Activated CD4-positive, alpha-beta T cell treated with anti-CD3 and anti-CD28 coated beads for 36 hours (primary cell): ENCODE measurements at regions of chr13 and their contacts with region 1.

Region 1: DNA sequence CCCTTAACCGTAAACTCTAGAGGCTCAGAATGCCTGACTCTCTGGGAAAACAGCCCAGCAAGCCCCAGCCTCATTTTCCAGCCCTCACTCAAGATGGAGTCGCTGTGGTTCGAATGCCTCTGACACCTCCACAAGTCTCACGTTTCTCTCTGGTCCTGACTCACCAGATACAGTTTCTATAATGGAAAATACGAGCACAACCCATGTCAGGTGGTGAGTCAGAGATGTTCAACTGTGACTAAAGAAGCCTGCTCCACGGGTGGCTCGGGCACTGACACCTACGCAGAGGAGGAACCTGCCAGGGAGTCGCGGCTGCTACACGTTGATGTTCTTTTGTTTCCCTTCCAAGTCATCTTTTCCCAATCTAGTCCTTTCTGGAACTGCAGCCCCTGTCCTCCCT is 87.1 kb upstream of the STK24 start:
- DNase-seq: peak; percentile 88
- ATAC-seq: peak; percentile 99
- H3K4me3 Mint-ChIP-seq: peak overlapping the region; percentile 2
- H3K27ac Mint-ChIP-seq: peak overlapping the region; percentile 81
- H3K4me1 Mint-ChIP-seq: peaks cover 16% of the 10 kb centered on the region
- H3K27me3 Mint-ChIP-seq: peaks cover 5% of the 10 kb centered on the region

Region 2: GRCh38 chr13:98129059-98129746 is 534.8 kb before region 1 on chr13:
- CTCF ChIA-PET with region 1: no interaction called
- POLR2A ChIA-PET with region 1: no interaction called
- intact Hi-C with region 1: no loop called
- DNase-seq: no peak
- ATAC-seq: no peak
- H3K4me3 Mint-ChIP-seq: no peak overlapping the region
- H3K27ac Mint-ChIP-seq: no peak overlapping the region
- H3K4me1 Mint-ChIP-seq: no peaks in the 10 kb centered on the region
- H3K27me3 Mint-ChIP-seq: peaks cover 16% of the 10 kb centered on the region

Region 3: DNA sequence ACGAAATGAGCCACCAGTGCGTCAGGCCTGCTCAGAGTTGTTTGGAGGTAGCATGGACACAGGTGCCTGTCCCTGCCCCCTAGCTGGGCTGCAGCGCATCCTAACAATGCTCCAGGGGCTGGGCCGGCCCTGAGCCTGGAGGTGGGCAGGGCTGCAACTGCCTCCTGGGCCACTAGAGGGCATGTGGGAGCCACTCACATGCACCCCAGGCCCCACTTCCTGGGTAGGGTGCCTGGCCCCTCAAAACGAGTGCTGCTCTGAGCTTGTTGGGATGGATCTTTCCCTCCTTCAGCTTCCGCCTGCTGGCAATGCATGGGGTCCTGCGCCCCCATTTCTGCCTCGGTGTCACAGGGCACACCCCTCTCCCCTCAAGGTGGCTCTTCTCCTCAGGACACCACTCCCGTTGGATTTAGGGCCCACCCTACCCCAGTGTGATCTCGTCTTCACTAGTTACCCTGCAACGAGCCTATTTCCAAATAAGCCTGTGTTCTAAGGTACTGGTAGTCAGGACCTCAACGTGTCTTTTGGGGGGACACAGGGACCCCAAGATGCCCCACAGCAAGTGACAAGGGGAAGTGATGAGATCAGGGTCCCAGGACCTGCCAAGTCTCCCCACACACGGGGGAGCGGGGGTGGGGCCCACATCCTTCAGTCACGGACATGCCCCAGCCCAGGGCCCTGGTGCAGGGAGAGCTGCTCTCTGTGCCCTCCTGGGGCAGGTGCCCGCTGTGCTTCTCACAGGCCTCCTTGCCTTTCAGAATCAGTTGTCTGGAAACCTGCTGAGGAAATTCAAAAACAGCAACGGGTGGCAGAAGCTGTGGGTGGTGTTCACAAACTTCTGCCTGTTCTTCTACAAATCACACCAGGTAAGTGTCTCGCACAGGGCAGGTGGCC is 218.5 kb before region 1 on chr13:
- CTCF ChIA-PET with region 1: interaction called, 16 read pairs
- POLR2A ChIA-PET with region 1: no interaction called
- intact Hi-C with region 1: no loop called
- DNase-seq: peak; percentile 89
- ATAC-seq: peak; percentile 95
- H3K4me3 Mint-ChIP-seq: no peak overlapping the region
- H3K27ac Mint-ChIP-seq: peak overlapping the region; percentile 88
- H3K4me1 Mint-ChIP-seq: peaks cover 15% of the 10 kb centered on the region
- H3K27me3 Mint-ChIP-seq: no peaks in the 10 kb centered on the region

Region 4: DNA sequence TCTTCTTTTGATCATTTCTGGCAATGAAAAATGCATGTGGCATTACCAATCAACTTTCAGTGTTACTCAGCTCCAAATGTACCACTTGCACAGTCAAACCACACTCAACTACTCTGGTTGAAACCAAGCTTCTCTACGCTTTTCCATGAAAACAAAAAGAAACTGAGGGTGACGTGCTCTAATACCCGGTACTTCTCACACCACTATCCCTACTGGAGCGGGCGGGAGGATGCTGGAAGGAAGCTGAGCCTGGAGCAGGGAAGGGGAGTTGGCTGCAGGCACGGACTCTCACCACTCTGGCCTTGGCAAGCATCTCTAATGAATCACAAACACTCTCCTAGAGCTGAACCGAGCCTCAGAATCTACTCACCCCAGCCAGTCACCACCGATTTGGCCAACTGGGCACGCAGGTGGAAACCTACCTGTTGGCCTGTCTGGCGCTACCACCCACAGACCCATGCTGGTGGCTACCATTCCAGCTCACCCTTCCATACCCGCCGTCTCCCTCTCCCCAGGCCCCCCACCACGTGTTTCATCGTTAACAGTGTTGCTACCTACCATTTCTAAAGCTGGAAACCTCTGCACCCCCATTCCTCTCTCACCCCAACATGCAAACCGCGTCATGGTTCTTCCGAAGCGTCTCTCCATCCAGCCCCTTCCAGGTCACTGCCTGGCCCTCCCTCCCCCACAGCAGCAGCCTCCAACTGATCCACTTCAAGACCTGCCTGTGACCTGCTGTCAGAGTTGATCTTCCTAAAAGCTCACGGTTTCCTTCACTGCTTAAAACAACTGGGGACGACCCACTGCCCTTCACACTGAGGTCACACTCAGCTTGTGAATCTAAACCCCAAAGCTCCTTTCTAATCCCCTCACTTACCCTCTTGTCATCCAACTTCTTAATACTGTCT is 135.1 kb before region 1 on chr13:
- CTCF ChIA-PET with region 1: no interaction called
- POLR2A ChIA-PET with region 1: no interaction called
- intact Hi-C with region 1: loop called in 1 of 2 experiments (anchors 1 kb)
- DNase-seq: peak; percentile 55
- ATAC-seq: peak; percentile 80
- H3K4me3 Mint-ChIP-seq: peak overlapping the region; percentile 29
- H3K27ac Mint-ChIP-seq: peak overlapping the region; percentile 87
- H3K4me1 Mint-ChIP-seq: peaks cover 93% of the 10 kb centered on the region
- H3K27me3 Mint-ChIP-seq: no peaks in the 10 kb centered on the region

Region 5: GRCh38 chr13:98570929-98571372 is 93.1 kb before region 1 on chr13:
- CTCF ChIA-PET with region 1: no interaction called
- POLR2A ChIA-PET with region 1: no interaction called
- intact Hi-C with region 1: loop called (anchors 1 to 5 kb)
- DNase-seq: peak; percentile 65
- ATAC-seq: peak; percentile 58
- H3K4me3 Mint-ChIP-seq: peak overlapping the region; percentile 75
- H3K27ac Mint-ChIP-seq: peak overlapping the region; percentile 73
- H3K4me1 Mint-ChIP-seq: peaks cover 87% of the 10 kb centered on the region
- H3K27me3 Mint-ChIP-seq: no peaks in the 10 kb centered on the region

Region 6: GRCh38 chr13:98653463-98653985 is 10.5 kb before region 1 on chr13:
- CTCF ChIA-PET with region 1: interaction called, 13 read pairs
- POLR2A ChIA-PET with region 1: no interaction called
- intact Hi-C with region 1: no loop called
- DNase-seq: peak; percentile 86
- ATAC-seq: peak; percentile 100
- H3K4me3 Mint-ChIP-seq: no peak overlapping the region
- H3K27ac Mint-ChIP-seq: peak overlapping the region; percentile 65
- H3K4me1 Mint-ChIP-seq: peaks cover 2% of the 10 kb centered on the region
- H3K27me3 Mint-ChIP-seq: peaks cover 2% of the 10 kb centered on the region

Region 7: GRCh38 chr13:98681049-98681448 is 17.0 kb after region 1 on chr13:
- CTCF ChIA-PET with region 1: no interaction called
- POLR2A ChIA-PET with region 1: no interaction called
- intact Hi-C with region 1: no loop called
- DNase-seq: no peak
- ATAC-seq: no peak
- H3K4me3 Mint-ChIP-seq: no peak overlapping the region
- H3K27ac Mint-ChIP-seq: no peak overlapping the region
- H3K4me1 Mint-ChIP-seq: no peaks in the 10 kb centered on the region
- H3K27me3 Mint-ChIP-seq: peaks cover 7% of the 10 kb centered on the region